Naive thymus-derived CD4-positive, alpha-beta T cell (primary cell): ENCODE measurements at regions of chr11 and their contacts with region 1.

Region 1: DNA sequence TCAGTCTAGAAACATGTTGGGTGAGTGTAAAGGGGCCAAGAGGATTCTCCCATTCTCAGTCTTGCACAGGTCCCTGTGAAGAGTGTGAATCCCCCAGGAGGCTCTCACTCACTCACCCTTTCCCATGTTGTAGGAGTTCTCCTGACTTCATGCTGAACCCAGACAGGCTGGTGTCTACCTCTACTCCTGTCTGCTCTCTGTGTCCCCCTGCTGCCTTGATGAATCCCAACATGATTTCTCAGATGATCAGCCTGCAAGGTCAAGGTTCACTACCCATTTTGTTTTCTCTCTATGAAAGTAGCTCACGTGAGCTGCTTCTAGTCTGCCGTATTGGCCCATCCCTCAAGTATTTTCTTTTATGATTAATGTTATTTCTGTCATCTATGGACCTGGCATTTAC is 500.6 kb downstream of the ETS1 start:
- DNase-seq: peak in 5 of 9 donors; percentile 16 to 38 (median 24)
- ATAC-seq: peak; percentile 40
- H3K4me3 ChIP-seq: no peak overlapping the region
- H3K4me3 Mint-ChIP-seq: peak overlapping the region in 6 of 10 donors; percentile 2 to 55 (median 25)
- H3K27ac ChIP-seq: no peak overlapping the region
- H3K27ac Mint-ChIP-seq: peak overlapping the region in 8 of 9 donors; percentile 2 to 76 (median 58)
- H3K4me1 ChIP-seq: peaks cover 18 to 30% of the 10 kb centered on the region in 2 donors
- H3K4me1 Mint-ChIP-seq: peaks cover 0 to 52% (median 41%) of the 10 kb centered on the region in 7 donors
- H3K27me3 ChIP-seq: no peaks in the 10 kb centered on the region
- H3K27me3 Mint-ChIP-seq: peaks cover 0 to 5% (median 0%) of the 10 kb centered on the region in 5 donors

Region 2: GRCh38 chr11:128026596-128026995 is 60.2 kb before region 1 on chr11:
- CTCF ChIA-PET with region 1: interaction called, 7 read pairs
- POLR2A ChIA-PET with region 1: interaction called, 4 read pairs
- intact Hi-C with region 1: loop called in 1 of 2 experiments (anchors 1 kb)
- DNase-seq: no peak
- ATAC-seq: peak; percentile 34
- H3K4me3 ChIP-seq: no peak overlapping the region
- H3K4me3 Mint-ChIP-seq: no peak overlapping the region
- H3K27ac ChIP-seq: no peak overlapping the region
- H3K27ac Mint-ChIP-seq: peak overlapping the region in 1 of 9 donors; percentile 12
- H3K4me1 ChIP-seq: peaks cover 0 to under 1% of the 10 kb centered on the region in 2 donors
- H3K4me1 Mint-ChIP-seq: peaks cover 0 to 5% (median 3%) of the 10 kb centered on the region in 7 donors
- H3K27me3 ChIP-seq: no peaks in the 10 kb centered on the region
- H3K27me3 Mint-ChIP-seq: peaks cover 0 to 37% (median 2%) of the 10 kb centered on the region in 5 donors

Region 3: DNA sequence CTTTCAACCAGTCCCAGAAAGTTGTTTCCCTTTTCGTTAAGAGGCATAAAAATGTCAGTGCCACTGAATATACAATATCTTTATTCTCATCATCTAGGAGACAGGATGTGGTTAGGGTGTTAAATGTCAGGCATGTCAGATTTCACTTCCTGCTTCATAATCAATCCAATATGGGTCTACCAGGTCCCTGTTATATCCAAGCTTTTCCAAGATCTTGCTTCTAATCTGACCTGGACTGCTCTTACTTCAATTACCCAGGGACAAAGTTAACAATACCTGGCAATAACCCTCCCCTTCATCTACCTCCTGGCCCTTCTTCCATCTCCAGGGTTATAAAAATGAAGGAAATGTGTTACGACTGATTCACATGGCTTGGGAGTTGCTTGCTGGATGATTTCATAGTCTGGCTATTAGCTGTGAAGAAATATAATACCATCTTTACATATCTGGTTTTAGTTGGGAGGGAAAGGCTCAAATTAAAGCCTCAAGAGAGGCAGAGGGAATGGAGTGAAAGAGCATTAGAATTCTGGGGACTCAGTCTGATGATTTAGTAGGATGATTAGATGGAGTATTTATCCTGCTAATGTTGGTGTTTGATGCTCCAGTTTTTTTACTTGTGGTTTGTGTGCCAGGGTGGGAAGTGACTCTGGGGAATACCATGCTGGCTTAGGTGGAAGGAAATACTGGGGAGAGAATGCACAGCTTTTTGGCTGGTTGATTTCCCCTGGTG is 33.7 kb before region 1 on chr11:
- CTCF ChIA-PET with region 1: interaction called, 4 read pairs
- POLR2A ChIA-PET with region 1: interaction called, 4 read pairs
- intact Hi-C with region 1: loop called in 1 of 2 experiments (anchors 1 kb)
- DNase-seq: peak in 7 of 9 donors; percentile 21 to 66 (median 61)
- ATAC-seq: peak; percentile 60
- H3K4me3 ChIP-seq: peak overlapping the region; percentile 28
- H3K4me3 Mint-ChIP-seq: peak overlapping the region; percentile 54 to 90 (median 80)
- H3K27ac ChIP-seq: peak overlapping the region; percentile 68
- H3K27ac Mint-ChIP-seq: peak overlapping the region; percentile 82 to 95 (median 90)
- H3K4me1 ChIP-seq: peaks cover 63 to 64% of the 10 kb centered on the region in 2 donors
- H3K4me1 Mint-ChIP-seq: peaks cover 40 to 81% (median 78%) of the 10 kb centered on the region in 7 donors
- H3K27me3 ChIP-seq: no peaks in the 10 kb centered on the region
- H3K27me3 Mint-ChIP-seq: no peaks in the 10 kb centered on the region

Region 4: DNA sequence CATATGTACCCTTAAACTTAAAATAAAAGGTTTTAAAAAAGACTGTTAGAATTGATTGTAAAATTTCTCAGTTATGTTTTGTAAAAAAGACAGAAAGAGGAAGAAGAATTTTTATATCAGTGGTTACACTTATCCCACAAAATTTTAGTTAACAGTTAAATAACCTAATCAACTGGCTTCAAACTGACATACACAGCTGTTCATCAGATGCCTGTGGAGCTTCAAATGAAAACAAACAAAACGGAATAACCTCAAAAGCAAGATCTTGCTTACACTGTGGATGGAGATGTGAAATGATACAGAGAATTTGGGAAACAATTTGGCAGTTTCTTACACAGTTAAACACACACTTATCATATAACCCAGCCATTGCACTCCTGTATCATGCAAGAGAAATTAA is 20.4 kb before region 1 on chr11:
- CTCF ChIA-PET with region 1: interaction called, 3 read pairs
- POLR2A ChIA-PET with region 1: no interaction called
- intact Hi-C with region 1: loop called in 1 of 2 experiments (anchors 2 kb)
- DNase-seq: no peak
- ATAC-seq: no peak
- H3K4me3 ChIP-seq: no peak overlapping the region
- H3K4me3 Mint-ChIP-seq: no peak overlapping the region
- H3K27ac ChIP-seq: no peak overlapping the region
- H3K27ac Mint-ChIP-seq: no peak overlapping the region
- H3K4me1 ChIP-seq: peaks cover 0 to under 1% of the 10 kb centered on the region in 2 donors
- H3K4me1 Mint-ChIP-seq: peaks cover 0 to 9% (median 0%) of the 10 kb centered on the region in 7 donors
- H3K27me3 ChIP-seq: no peaks in the 10 kb centered on the region
- H3K27me3 Mint-ChIP-seq: peaks cover 0 to 12% (median 0%) of the 10 kb centered on the region in 5 donors

Region 5: DNA sequence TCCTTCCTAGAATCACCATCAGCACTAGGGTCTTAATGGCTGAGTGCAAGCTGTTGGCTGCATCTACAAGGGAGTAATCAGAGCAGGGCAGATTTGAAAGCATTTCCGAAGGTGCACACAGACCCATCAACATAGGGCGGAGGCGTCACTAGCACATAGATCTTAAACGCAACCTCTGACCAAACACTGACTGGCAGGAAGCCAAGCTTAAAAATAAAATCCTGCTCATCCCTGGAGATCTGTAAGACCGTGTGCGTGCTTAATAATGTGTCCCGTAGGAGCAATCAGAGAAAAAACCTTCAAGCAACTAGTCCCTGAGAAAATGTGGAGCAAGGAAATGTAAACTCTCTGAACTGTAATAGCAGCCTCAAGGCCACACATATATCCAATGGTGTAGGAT is 30.1 kb after region 1 on chr11:
- CTCF ChIA-PET with region 1: no interaction called
- POLR2A ChIA-PET with region 1: no interaction called
- intact Hi-C with region 1: loop called in 1 of 2 experiments (anchors 5 kb)
- DNase-seq: no peak
- ATAC-seq: no peak
- H3K4me3 ChIP-seq: no peak overlapping the region
- H3K4me3 Mint-ChIP-seq: no peak overlapping the region
- H3K27ac ChIP-seq: no peak overlapping the region
- H3K27ac Mint-ChIP-seq: no peak overlapping the region
- H3K4me1 ChIP-seq: no peaks in the 10 kb centered on the region
- H3K4me1 Mint-ChIP-seq: peaks cover 0 to 1% (median 0%) of the 10 kb centered on the region in 7 donors
- H3K27me3 ChIP-seq: no peaks in the 10 kb centered on the region
- H3K27me3 Mint-ChIP-seq: peaks cover 0 to 31% (median 0%) of the 10 kb centered on the region in 5 donors